Activated CD8-positive, alpha-beta T cell treated with anti-CD3 and anti-CD28 coated beads for 36 hours (primary cell): ENCODE measurements at regions of chr10 and their contacts with region 1.

Region 1: GRCh38 chr10:79195091-79195923 is 126.5 kb downstream of the ZMIZ1 start:
- DNase-seq: peak; percentile 89
- ATAC-seq: peak; percentile 92
- H3K4me3 Mint-ChIP-seq: no peak overlapping the region
- H3K27ac Mint-ChIP-seq: no peak overlapping the region
- H3K4me1 Mint-ChIP-seq: peaks cover 4% of the 10 kb centered on the region
- H3K27me3 Mint-ChIP-seq: no peaks in the 10 kb centered on the region
- CTCF ChIP-seq: peak; percentile 95

Region 2: GRCh38 chr10:78657163-78657861 is 538.0 kb before region 1 on chr10:
- CTCF ChIA-PET with region 1: interaction called, 11 read pairs
- POLR2A ChIA-PET with region 1: no interaction called
- intact Hi-C with region 1: loop called (anchors 10 kb)
- DNase-seq: peak; percentile 85
- ATAC-seq: peak; percentile 89
- H3K4me3 Mint-ChIP-seq: no peak overlapping the region
- H3K27ac Mint-ChIP-seq: no peak overlapping the region
- H3K4me1 Mint-ChIP-seq: no peaks in the 10 kb centered on the region
- H3K27me3 Mint-ChIP-seq: peaks cover 4% of the 10 kb centered on the region
- CTCF ChIP-seq: peak; percentile 69

Region 3: GRCh38 chr10:78907551-78908211 is 287.6 kb before region 1 on chr10:
- CTCF ChIA-PET with region 1: interaction called, 10 read pairs
- POLR2A ChIA-PET with region 1: no interaction called
- intact Hi-C with region 1: no loop called
- DNase-seq: no peak
- ATAC-seq: no peak
- H3K4me3 Mint-ChIP-seq: no peak overlapping the region
- H3K27ac Mint-ChIP-seq: no peak overlapping the region
- H3K4me1 Mint-ChIP-seq: no peaks in the 10 kb centered on the region
- H3K27me3 Mint-ChIP-seq: no peaks in the 10 kb centered on the region
- CTCF ChIP-seq: no peak

Region 4: GRCh38 chr10:78937800-78938694 is 257.3 kb before region 1 on chr10:
- CTCF ChIA-PET with region 1: interaction called, 26 read pairs
- POLR2A ChIA-PET with region 1: no interaction called
- intact Hi-C with region 1: loop called (anchors 10 kb)
- DNase-seq: peak; percentile 49
- ATAC-seq: peak; percentile 79
- H3K4me3 Mint-ChIP-seq: no peak overlapping the region
- H3K27ac Mint-ChIP-seq: no peak overlapping the region
- H3K4me1 Mint-ChIP-seq: no peaks in the 10 kb centered on the region
- H3K27me3 Mint-ChIP-seq: no peaks in the 10 kb centered on the region
- CTCF ChIP-seq: peak; percentile 34

Region 5: GRCh38 chr10:79073784-79074432 is 121.4 kb before region 1 on chr10:
- CTCF ChIA-PET with region 1: interaction called, 15 read pairs
- POLR2A ChIA-PET with region 1: no interaction called
- intact Hi-C with region 1: loop called (anchors 5 kb)
- DNase-seq: no peak
- ATAC-seq: no peak
- H3K4me3 Mint-ChIP-seq: no peak overlapping the region
- H3K27ac Mint-ChIP-seq: no peak overlapping the region
- H3K4me1 Mint-ChIP-seq: peaks cover 14% of the 10 kb centered on the region
- H3K27me3 Mint-ChIP-seq: no peaks in the 10 kb centered on the region
- CTCF ChIP-seq: no peak

Region 6: GRCh38 chr10:79159141-79159651 is 36.1 kb before region 1 on chr10:
- CTCF ChIA-PET with region 1: interaction called, 10 read pairs
- POLR2A ChIA-PET with region 1: no interaction called
- intact Hi-C with region 1: no loop called
- DNase-seq: no peak
- ATAC-seq: no peak
- H3K4me3 Mint-ChIP-seq: no peak overlapping the region
- H3K27ac Mint-ChIP-seq: no peak overlapping the region
- H3K4me1 Mint-ChIP-seq: no peaks in the 10 kb centered on the region
- H3K27me3 Mint-ChIP-seq: no peaks in the 10 kb centered on the region
- CTCF ChIP-seq: no peak

Region 7: GRCh38 chr10:79184145-79184625 is 11.1 kb before region 1 on chr10:
- CTCF ChIA-PET with region 1: interaction called, 27 read pairs
- POLR2A ChIA-PET with region 1: no interaction called
- intact Hi-C with region 1: no loop called
- DNase-seq: no peak
- ATAC-seq: no peak
- H3K4me3 Mint-ChIP-seq: no peak overlapping the region
- H3K27ac Mint-ChIP-seq: no peak overlapping the region
- H3K4me1 Mint-ChIP-seq: no peaks in the 10 kb centered on the region
- H3K27me3 Mint-ChIP-seq: no peaks in the 10 kb centered on the region
- CTCF ChIP-seq: no peak

Region 8: DNA sequence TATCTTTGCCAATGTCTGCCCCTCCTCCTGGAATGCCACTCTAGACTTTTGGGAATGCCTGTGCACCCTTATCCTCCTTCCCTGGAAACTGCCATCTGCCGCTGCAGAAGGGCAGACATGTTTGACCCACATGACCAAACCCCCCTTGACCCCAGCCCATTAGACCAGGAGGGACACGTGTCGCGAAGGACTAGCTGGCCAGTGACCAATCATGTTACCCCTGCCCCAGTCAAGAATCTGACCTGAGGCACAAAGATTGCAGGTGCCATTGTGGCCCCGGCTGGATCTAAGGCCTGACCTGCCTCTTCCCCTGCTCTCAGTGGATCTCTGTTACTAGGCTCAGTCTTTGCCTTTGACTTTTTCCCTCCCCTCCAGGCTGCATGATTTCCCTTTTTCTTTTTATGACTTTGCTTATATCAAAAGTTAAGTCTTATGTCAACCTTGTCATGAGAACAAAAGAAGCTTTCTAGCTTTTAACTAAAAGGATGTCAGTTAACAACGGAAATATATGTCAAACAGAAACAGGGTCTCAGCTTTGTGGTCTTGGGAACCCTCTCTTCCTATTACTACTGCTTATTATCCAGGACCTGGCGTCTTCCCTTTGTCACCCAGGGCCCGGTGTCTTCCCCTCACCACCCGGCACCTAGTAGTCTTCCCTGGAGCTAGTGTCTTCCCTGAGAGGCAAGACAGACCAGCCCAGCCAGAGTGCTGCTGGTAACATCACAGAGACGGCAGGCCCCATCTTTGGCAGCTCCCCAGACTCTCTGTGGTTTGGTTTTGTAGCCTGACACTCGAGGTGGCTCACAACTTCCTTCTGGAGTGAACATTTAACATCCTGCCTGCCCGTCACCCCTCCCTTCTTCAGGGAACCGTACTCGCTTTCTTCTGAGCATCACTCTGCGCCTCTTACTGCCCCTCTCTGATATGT is 127.6 kb after region 1 on chr10:
- CTCF ChIA-PET with region 1: no interaction called
- POLR2A ChIA-PET with region 1: no interaction called
- intact Hi-C with region 1: no loop called
- DNase-seq: peak; percentile 93
- ATAC-seq: peak; percentile 75
- H3K4me3 Mint-ChIP-seq: peak overlapping the region; percentile 38
- H3K27ac Mint-ChIP-seq: peak overlapping the region; percentile 94
- H3K4me1 Mint-ChIP-seq: peaks cover 66% of the 10 kb centered on the region
- H3K27me3 Mint-ChIP-seq: no peaks in the 10 kb centered on the region
- CTCF ChIP-seq: no peak